Activated CD4-positive, alpha-beta T cell treated with anti-CD3 and anti-CD28 coated beads, Interleukin-2, amount 10 ng/mL, durations not matched to agents 24 days and 14 days (primary cell): ENCODE measurements at regions of chr14 and their contacts with region 1.

Region 1: DNA sequence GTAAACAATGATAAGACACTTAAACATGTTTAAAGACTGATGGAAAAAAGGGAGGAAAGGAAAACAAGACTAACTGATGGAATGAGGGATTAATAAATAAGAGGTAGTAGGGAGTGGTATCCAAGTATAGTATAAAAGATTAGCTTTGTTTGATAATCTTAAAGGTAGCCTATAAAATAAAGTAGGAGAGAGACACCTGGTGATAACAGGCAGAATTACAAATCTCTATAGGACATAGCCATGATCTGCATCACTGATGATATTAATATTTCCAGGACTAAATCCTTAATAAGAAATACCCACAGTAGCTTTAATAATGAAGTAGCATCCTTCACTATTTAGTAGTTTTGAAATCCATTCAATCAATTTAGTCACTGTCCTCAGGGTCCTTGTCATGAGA is 30.4 kb downstream of the DLGAP5 start:
- DNase-seq: no peak
- H3K4me3 Mint-ChIP-seq: no peak overlapping the region
- H3K27ac Mint-ChIP-seq: no peak overlapping the region
- H3K4me1 Mint-ChIP-seq: peaks cover 19% of the 10 kb centered on the region
- H3K27me3 Mint-ChIP-seq: no peaks in the 10 kb centered on the region

Region 2: DNA sequence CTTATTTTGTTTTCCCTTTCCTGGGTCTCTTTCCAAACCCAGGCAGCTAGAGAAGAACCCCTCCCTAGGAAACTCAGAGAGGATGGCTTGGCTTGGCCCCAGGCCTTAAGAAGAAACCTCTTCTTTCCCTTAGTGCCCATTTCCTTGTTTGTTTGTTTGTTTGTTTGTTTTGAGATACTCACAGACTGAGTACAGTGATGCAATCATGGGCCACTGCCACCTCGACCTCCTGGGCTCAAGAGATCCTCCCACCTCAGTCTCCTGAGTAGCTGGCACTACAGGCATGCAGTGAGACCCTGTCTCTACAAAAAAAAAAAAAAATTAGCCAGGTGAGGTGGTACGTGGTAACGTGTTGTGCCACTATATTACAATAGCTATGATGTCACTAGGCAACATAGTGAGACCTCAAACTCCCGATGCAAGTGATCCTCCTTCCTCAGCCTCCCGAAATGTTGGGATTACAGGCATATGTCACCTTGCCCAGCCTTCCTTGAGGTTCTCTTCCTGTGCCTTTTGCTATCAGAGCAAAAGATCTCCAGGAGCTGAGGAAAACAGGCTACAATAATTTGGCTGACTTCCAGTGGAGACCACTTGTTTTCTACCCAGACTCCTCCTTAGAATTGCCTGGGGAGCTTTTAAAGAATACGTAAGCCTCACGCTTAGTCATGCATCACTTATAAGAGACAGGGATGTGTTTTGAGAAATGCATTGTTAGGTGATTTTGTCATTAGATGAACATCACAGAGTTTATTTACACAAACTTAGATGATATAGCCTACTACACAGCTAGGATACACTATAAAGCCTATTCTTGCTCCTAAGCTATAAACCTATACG is 66.5 kb before region 1 on chr14:
- intact Hi-C with region 1: loop called (anchors 1 kb)
- DNase-seq: no peak
- H3K4me3 Mint-ChIP-seq: no peak overlapping the region
- H3K27ac Mint-ChIP-seq: no peak overlapping the region
- H3K4me1 Mint-ChIP-seq: peaks cover 25% of the 10 kb centered on the region
- H3K27me3 Mint-ChIP-seq: peaks cover 2% of the 10 kb centered on the region